ENCODE measurements at regions of chrX and their contacts with region 1.

Region 1: GRCh38 chrX:10884246-10884645 is 226.9 kb upstream of the HCCS start:
- DNase-seq: no peak
- H3K4me3 ChIP-seq: no peak overlapping the region
- H3K27ac ChIP-seq: no peak overlapping the region
- H3K4me1 ChIP-seq: no peaks in the 10 kb centered on the region
- H3K27me3 ChIP-seq: no peaks in the 10 kb centered on the region
- CTCF ChIP-seq: no peak
- EP300 ChIP-seq: no peak
- POLR2A ChIP-seq: no peak

Region 2: GRCh38 chrX:10781847-10782530 is 102.3 kb before region 1 on chrX:
- intact Hi-C with region 1: no loop called
- DNase-seq: no peak
- H3K4me3 ChIP-seq: no peak overlapping the region
- H3K27ac ChIP-seq: no peak overlapping the region
- H3K4me1 ChIP-seq: no peaks in the 10 kb centered on the region
- H3K27me3 ChIP-seq: no peaks in the 10 kb centered on the region
- CTCF ChIP-seq: no peak
- EP300 ChIP-seq: no peak
- POLR2A ChIP-seq: no peak

Region 3: DNA sequence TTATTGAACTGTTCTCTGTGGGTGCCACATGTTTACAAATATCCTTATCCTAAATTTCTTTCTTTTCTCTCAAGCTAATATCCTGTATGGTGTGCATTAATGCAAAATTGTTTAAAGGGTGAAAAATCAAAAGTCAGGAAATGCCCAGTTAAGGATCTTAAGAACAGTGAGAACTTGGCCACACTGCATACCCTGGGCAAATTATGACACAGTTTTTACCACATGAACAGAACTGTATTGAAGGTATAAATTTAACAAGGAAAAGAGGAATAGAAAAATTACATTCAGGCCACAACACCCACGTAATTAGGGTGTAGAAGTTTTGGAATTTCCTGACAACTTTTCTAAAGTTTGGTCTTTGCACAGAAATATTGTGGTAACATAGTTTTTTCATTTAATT is 132.5 kb after region 1 on chrX:
- intact Hi-C with region 1: no loop called
- DNase-seq: no peak
- H3K4me3 ChIP-seq: no peak overlapping the region
- H3K27ac ChIP-seq: no peak overlapping the region
- H3K4me1 ChIP-seq: no peaks in the 10 kb centered on the region
- H3K27me3 ChIP-seq: no peaks in the 10 kb centered on the region
- CTCF ChIP-seq: no peak
- EP300 ChIP-seq: no peak
- POLR2A ChIP-seq: no peak

Region 4: GRCh38 chrX:11081511-11081910 is 197.3 kb after region 1 on chrX:
- intact Hi-C with region 1: loop called in 1 of 4 experiments (anchors 10 kb)
- DNase-seq: no peak
- H3K4me3 ChIP-seq: no peak overlapping the region
- H3K27ac ChIP-seq: no peak overlapping the region
- H3K4me1 ChIP-seq: no peaks in the 10 kb centered on the region
- H3K27me3 ChIP-seq: no peaks in the 10 kb centered on the region
- CTCF ChIP-seq: no peak
- EP300 ChIP-seq: no peak
- POLR2A ChIP-seq: no peak